ENCODE measurements at regions of chr3 and their contacts with region 1.

Region 1: DNA sequence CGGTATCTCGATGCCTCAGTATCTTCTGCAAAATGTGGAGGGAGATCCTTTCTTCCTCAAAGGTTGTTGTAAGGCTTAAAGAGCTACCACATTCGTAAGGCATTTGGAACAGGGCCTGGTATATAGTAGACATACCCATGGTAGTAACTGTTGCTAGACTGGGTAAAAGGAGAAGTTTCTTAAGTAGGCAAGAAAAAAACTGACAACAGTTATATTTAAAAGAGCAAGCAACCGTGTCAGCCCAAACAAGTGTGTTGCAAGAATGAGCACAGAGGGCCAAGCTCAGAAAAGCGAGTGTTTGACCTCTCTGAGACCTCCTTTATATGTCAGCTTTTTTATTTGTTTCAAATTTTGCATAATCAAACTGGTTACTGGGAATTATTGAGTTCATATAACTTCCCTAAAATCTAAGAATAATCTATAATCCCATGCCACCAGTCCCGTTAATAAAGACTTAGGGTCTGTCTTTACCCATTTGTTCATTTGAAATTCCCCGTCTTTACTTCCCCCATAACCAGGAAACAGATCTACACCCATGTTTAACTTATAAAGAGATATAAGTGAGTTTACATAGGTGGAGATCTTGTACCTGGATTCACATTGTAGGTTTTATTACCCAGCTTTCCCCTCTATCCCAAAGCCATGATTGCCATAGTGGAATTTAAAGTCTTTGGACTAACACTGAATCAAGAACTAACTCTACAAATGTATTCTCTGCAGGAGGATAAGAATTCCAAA is 7.3 kb downstream of the B3GNT5 start:
- H3K4me3 Mint-ChIP-seq: peak overlapping the region; percentile 37
- H3K27ac Mint-ChIP-seq: peak overlapping the region; percentile 75
- H3K4me1 Mint-ChIP-seq: peaks cover 55% of the 10 kb centered on the region
- H3K27me3 Mint-ChIP-seq: no peaks in the 10 kb centered on the region

Region 2: DNA sequence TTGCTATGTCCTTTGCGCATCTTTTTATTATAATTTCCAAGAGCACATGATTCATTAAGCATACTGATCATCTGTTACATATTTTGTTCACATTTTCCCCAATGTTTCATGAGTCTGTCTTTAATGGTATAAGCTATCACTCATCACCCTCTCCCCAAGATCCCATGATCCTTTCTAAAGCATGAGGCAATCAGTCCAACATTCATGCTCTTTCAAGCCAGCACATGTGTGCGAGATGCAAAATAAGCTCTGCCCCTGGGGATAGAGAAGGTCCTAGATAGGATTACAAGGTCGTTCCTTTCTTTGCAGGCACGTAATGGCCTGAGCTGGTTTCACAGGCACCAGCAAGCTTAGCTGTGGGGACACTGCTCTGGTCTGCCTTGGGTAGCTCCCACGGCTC is 39.5 kb before region 1 on chr3:
- intact Hi-C with region 1: no loop called
- H3K4me3 Mint-ChIP-seq: no peak overlapping the region
- H3K27ac Mint-ChIP-seq: peak overlapping the region; percentile 45
- H3K4me1 Mint-ChIP-seq: peaks cover 72% of the 10 kb centered on the region
- H3K27me3 Mint-ChIP-seq: peaks cover 8% of the 10 kb centered on the region

Region 3: DNA sequence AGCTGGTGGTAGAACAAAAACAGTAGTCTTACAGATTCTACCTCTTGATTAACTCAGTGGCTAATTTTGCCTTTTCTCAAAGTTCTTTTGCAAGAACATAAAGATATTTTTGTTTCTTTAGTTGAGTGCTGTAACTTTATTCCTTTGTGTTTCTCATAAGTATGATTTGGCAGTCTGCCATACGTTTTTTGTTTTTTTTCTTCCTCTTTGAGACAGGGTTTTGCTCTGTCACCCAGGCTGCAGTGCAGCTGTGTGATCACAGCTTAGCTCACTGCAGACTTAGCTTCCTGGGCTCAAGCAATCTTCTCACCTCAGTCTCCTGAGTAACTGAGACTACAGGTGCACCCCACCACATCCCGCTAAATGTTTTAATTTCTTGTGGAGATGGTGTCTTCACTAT is 15.1 kb after region 1 on chr3:
- intact Hi-C with region 1: loop called (anchors 2 kb)
- H3K4me3 Mint-ChIP-seq: peak overlapping the region; percentile 17
- H3K27ac Mint-ChIP-seq: peak overlapping the region; percentile 73
- H3K4me1 Mint-ChIP-seq: peaks cover 36% of the 10 kb centered on the region
- H3K27me3 Mint-ChIP-seq: no peaks in the 10 kb centered on the region

Region 4: GRCh38 chr3:183298701-183299153 is 38.4 kb after region 1 on chr3:
- intact Hi-C with region 1: loop called (anchors 5 kb)
- H3K4me3 Mint-ChIP-seq: no peak overlapping the region
- H3K27ac Mint-ChIP-seq: peak overlapping the region; percentile 58
- H3K4me1 Mint-ChIP-seq: peaks cover 64% of the 10 kb centered on the region
- H3K27me3 Mint-ChIP-seq: no peaks in the 10 kb centered on the region

Region 5: DNA sequence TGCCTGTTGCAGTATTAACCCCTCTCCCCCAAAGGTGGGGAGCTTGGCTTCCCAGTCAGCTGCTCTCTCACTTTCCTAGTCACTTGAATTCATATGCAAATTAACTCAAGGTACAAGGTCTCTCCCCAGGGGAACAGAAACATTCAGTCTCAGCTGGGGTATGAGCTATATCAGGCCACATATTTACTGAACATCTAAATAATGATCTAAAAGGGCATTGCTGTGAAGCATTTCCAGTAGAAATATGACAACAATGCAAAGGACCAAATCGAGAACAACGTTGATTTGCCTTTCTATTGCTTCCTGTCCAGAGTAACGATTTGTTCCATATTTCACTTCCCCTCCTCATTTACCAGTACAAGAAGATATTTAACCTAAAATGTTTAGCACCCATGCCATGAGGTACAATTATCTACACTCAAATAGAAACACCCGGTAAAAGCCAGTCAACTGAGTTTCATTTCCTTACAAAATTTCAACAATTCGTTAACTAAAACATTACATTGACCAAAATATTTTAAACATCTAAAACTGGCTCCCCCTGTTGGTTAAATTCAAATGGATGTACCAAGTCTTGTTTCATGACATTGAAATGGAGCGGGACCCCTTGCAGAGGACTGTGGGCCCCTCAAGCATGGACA is 331.7 kb after region 1 on chr3:
- intact Hi-C with region 1: no loop called
- H3K4me3 Mint-ChIP-seq: peak overlapping the region; percentile 17
- H3K27ac Mint-ChIP-seq: peak overlapping the region; percentile 12
- H3K4me1 Mint-ChIP-seq: peaks cover 42% of the 10 kb centered on the region
- H3K27me3 Mint-ChIP-seq: no peaks in the 10 kb centered on the region

Region 6: DNA sequence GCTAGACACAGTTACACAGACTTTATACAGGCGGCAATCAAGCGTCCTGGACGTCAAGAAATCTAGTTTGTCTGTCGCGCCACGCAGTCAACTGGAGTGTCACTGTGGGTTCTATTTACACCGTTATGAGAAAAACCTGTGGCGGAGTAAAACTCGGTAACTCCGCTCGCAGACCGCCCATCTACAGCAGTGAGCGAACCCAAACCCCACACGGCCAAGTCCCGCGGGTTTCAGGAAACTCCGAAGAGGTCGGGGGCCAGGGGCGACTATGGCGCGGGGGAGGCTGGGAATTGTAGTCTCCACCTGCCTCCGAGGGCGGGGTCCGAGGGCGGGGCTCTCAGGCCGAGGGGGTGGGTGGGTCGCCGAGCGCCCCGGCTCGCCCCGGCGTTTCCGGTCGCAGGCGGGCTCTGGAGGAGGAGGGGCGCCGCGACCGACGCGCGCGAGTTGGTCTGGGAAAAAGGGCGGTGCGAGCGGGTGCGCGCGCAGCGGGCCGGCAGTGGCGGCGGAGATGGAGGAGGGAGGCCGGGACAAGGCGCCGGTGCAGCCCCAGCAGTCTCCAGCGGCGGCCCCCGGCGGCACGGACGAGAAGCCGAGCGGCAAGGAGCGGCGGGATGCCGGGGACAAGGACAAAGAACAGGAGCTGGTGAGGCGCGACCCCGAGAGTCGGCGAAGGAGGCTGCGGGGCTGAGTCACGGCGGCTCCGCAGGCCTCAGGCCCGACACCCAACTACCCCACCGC is 1038.6 kb after region 1 on chr3 and contains the start of gene PSMD2:
- intact Hi-C with region 1: no loop called
- H3K4me3 Mint-ChIP-seq: peak within 1 kb of the TSS; percentile 98
- H3K27ac Mint-ChIP-seq: peak within 1 kb of the TSS; percentile 91
- H3K4me1 Mint-ChIP-seq: peaks cover 31% of the 10 kb centered on the region
- H3K27me3 Mint-ChIP-seq: peaks cover 3% of the 10 kb centered on the region